OCI-LY7 (cell line): ENCODE measurements at regions of chrX and their contacts with region 1.

Region 1: DNA sequence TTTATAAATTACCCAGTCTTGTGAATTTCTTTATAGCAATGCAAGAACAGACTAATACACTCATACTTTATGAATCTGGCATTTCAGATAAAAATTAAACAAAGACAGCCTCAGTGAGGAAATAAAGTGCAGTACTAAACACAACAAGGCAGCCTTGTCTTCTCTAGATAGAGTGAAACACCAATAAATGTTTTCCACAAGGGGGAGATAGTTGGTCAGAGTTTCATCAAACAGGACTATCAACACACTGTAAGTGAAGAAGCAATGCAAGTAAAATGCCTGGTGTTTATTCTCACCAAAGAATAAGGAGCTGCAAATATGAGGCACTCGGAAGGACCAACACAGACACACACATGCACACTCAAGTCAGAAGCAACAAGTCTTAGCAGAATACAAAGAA is 62.8 kb downstream of the FAM9B start:
- DNase-seq: peak; percentile 22
- H3K4me3 ChIP-seq: no peak overlapping the region
- H3K27ac ChIP-seq: no peak overlapping the region
- H3K4me1 ChIP-seq: no peaks in the 10 kb centered on the region
- CTCF ChIP-seq: peak; percentile 53; the same call in 1 of the 2 replicates

Region 2: GRCh38 chrX:8433109-8434062 is 537.7 kb before region 1 on chrX:
- CTCF ChIA-PET with region 1: no interaction called
- POLR2A ChIA-PET with region 1: no interaction called
- intact Hi-C with region 1: no loop called
- DNase-seq: no peak
- H3K4me3 ChIP-seq: no peak overlapping the region
- H3K27ac ChIP-seq: no peak overlapping the region
- H3K4me1 ChIP-seq: no peaks in the 10 kb centered on the region
- CTCF ChIP-seq: no peak

Region 3: GRCh38 chrX:9708904-9709553 is 737.9 kb after region 1 on chrX:
- CTCF ChIA-PET with region 1: no interaction called
- POLR2A ChIA-PET with region 1: no interaction called
- intact Hi-C with region 1: loop called (anchors 2 kb)
- DNase-seq: peak; percentile 81
- H3K4me3 ChIP-seq: no peak overlapping the region
- H3K27ac ChIP-seq: no peak overlapping the region
- H3K4me1 ChIP-seq: peaks cover 4% of the 10 kb centered on the region
- CTCF ChIP-seq: peak; percentile 82